Right cardiac atrium (tissue), 5 donors: ENCODE measurements at regions of chr11 and their contacts with region 1.

Region 1: GRCh38 chr11:117134431-117134830 is 9.7 kb upstream of the PAFAH1B2 start:
- DNase-seq: no peak
- ATAC-seq: no peak
- H3K4me3 ChIP-seq: no peak overlapping the region
- H3K27ac ChIP-seq: no peak overlapping the region
- H3K4me1 ChIP-seq: no peaks in the 10 kb centered on the region
- H3K27me3 ChIP-seq: no peaks in the 10 kb centered on the region

Region 2: GRCh38 chr11:116691771-116692177 is 442.7 kb before region 1 on chr11:
- intact Hi-C with region 1: no loop called
- DNase-seq: peak in 2 of 3 donors; percentile 65 to 76
- ATAC-seq: peak; percentile 47 to 73
- H3K4me3 ChIP-seq: no peak overlapping the region
- H3K27ac ChIP-seq: no peak overlapping the region
- H3K4me1 ChIP-seq: no peaks in the 10 kb centered on the region
- H3K27me3 ChIP-seq: no peaks in the 10 kb centered on the region

Region 3: GRCh38 chr11:117189191-117189930 is 54.9 kb after region 1 on chr11:
- intact Hi-C with region 1: no loop called
- DNase-seq: peak in 1 of 3 donors; percentile 64
- ATAC-seq: peak in 1 of 2 donors; percentile 10
- H3K4me3 ChIP-seq: no peak overlapping the region
- H3K27ac ChIP-seq: no peak overlapping the region
- H3K4me1 ChIP-seq: no peaks in the 10 kb centered on the region
- H3K27me3 ChIP-seq: no peaks in the 10 kb centered on the region

Region 4: DNA sequence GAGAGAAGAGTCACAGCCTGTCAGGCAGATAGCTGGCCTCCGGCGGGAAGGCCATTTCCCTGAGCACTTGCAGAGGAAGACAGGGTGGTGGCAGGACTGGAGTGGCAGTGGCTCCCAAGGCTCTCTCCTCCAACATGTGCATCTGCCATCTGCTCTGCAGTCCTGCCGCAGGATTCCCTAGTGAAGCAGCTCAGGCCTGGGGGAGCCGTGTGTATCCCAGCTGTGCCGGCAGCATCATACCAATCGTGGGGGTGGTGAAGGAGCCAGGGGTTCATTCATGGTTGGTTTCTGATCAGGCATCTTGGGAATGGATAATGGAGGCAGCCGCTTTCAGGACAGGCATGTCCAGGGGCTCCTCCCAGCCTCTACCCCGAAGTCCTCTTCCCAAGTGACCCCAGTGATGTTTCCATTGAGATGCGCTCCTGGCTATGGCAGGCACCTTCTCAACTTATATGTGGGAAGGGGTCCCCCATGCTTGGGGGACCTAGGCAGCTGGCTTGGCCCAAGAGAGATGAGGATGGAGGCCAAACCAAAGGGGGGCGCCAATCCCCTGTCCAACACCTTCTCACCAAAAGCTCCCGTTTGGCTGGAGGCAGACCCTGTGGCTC is 70.9 kb after region 1 on chr11:
- intact Hi-C with region 1: loop called in 1 of 4 experiments (anchors 5 kb)
- DNase-seq: peak in 2 of 3 donors; percentile 34 to 52
- ATAC-seq: no peak
- H3K4me3 ChIP-seq: no peak overlapping the region
- H3K27ac ChIP-seq: peak overlapping the region; percentile 71
- H3K4me1 ChIP-seq: peaks cover 13% of the 10 kb centered on the region
- H3K27me3 ChIP-seq: no peaks in the 10 kb centered on the region

Region 5: DNA sequence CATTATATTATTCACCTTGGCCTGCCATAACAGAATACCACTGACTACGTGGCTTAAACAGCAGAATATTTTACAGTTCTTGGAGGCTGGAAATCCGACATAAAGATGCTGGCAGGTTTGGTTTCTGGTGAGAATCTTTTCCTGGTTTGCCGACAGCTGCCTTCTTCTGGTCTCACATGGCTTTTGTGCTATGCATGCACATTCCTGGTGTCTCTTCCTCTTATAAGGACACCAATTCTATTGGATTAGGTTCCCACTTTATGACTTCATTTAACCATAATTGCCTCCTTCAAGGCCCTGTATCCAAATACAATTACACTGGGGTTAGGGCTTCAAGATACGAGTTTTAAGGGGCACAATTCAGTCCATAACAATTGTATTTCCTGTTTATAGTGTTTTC is 115.1 kb after region 1 on chr11:
- intact Hi-C with region 1: no loop called
- DNase-seq: no peak
- ATAC-seq: no peak
- H3K4me3 ChIP-seq: no peak overlapping the region
- H3K27ac ChIP-seq: no peak overlapping the region
- H3K4me1 ChIP-seq: no peaks in the 10 kb centered on the region
- H3K27me3 ChIP-seq: no peaks in the 10 kb centered on the region

Region 6: DNA sequence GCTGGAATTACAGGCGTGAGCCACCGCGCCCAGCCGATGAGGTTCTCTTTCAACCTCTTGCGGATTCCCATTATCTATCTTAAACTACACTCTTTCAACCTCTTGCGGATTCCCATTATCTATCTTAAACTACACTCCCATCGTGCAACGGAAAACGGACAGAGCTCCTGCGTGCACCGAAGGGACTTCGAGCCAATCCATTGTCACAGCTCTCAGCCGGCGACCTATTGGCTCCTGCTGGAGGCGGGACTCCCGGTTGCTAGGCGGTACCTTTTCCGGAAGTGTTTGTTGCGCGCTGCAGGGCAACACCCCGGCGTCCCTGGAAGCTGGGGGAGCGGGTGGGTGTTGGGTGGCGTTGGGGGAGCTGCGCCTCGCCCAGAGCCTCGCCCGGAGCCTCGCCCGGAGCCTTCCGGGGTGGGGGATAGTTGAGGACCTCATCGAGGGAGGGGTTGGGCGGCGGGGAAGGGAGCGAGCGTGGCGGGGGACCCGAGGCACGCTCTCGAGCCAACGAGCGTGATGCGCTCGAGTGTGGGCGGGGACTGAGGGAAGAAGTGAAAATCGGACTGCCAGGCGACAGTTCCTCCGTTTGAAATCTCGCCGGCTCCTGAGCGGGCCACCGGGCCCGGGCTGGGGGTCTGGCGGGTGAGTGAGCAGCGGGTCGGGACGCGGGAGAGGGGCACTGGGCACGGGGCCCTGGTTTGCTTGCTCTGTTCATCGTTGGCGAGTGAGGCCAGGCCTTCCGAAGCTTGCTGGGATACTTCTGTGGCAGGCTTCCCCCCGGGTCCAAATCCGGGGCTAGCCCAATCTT is 193.3 kb after region 1 on chr11 and contains the start of gene CEP164:
- intact Hi-C with region 1: no loop called
- DNase-seq: peak; percentile 97 to 98 (median 97)
- ATAC-seq: peak; percentile 98 to 99
- H3K4me3 ChIP-seq: peak within 1 kb of the TSS; percentile 79
- H3K27ac ChIP-seq: peak within 1 kb of the TSS; percentile 89
- H3K4me1 ChIP-seq: peaks cover 3% of the 10 kb centered on the region
- H3K27me3 ChIP-seq: no peaks in the 10 kb centered on the region
- total RNA-seq, gene CEP164: 7.9 to 10.6 (median 9.2) TPM